Activated B cell treated with CpG ODN at 0.5 μM for 24 hours (primary cell): ENCODE measurements at regions of chr14 and their contacts with region 1.

Region 1: DNA sequence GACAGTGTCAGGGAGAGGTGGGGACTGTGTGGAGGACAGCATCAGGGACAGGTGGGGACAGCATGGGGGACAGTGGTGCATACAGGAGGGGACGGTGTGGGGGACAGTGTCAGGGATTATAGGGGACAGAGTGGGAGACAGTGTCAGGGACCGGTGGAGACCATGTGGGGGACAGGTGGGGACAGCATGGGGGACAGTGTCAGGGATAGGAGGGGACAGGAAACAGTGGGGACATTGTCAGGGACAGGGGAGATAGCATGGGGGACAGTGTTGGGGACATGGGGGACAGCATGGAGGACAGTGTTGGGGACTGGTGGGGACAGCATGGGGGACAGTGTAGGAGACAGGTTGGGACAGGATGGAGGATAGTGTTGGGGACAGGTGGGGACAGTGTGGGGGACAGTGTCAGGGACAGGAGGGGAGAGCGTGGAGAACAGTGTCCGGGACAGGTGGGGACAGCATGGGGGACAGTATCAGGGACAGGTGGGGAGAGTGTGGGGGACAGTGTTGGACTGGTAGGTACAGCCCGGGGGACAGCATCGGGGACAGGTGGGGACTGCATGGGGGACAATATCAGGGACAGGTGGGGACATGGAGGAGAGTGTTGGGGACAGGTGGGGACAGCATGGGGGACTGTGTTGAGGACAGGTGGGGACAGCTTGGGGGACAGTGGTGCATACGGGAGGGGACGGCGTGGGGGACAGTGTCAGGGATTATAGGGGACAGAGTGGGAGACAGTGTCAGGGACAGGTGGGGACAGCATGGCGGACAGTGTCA is 212.1 kb downstream of the TMEM121 start:
- DNase-seq: no peak
- ATAC-seq: peak; percentile 18
- H3K4me3 Mint-ChIP-seq: no peak overlapping the region
- H3K27ac Mint-ChIP-seq: peak overlapping the region; percentile 19
- H3K4me1 Mint-ChIP-seq: peaks cover 20% of the 10 kb centered on the region
- H3K27me3 Mint-ChIP-seq: no peaks in the 10 kb centered on the region
- CTCF ChIP-seq: no peak

Region 2: DNA sequence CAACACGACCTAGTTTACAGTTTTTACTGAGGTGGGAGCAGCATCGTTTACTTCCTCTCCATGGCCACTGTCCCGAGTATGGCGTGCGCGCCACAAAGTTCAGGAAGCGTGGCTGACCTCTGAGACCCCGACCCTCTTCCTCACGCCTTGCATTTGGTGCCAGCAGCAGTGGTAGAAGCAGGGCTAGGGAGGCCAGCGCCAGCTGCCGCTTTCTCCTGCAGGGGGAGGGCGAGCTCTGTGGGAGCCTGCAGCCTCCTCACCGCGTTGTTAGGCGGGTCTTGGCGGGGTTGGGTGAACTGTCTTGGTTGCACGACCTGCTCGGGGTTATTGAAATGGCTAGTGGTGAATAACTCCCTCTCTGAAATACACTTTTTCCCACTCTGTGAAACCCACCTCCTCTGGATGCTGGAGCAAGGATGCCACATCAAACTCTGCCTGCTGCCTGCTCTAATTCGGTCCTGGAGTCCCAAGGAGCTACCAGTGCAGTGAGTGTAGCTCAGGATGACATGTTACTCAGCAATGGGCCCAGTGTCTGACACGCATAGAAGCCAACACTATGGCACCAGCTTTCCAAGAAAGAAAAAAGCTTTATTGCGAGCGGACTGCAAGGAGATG is 1832.5 kb before region 1 on chr14:
- CTCF ChIA-PET with region 1: no interaction called
- POLR2A ChIA-PET with region 1: no interaction called
- intact Hi-C with region 1: no loop called
- DNase-seq: no peak
- ATAC-seq: no peak
- H3K4me3 Mint-ChIP-seq: no peak overlapping the region
- H3K27ac Mint-ChIP-seq: no peak overlapping the region
- H3K4me1 Mint-ChIP-seq: peaks cover 10% of the 10 kb centered on the region
- H3K27me3 Mint-ChIP-seq: no peaks in the 10 kb centered on the region
- CTCF ChIP-seq: no peak

Region 3: DNA sequence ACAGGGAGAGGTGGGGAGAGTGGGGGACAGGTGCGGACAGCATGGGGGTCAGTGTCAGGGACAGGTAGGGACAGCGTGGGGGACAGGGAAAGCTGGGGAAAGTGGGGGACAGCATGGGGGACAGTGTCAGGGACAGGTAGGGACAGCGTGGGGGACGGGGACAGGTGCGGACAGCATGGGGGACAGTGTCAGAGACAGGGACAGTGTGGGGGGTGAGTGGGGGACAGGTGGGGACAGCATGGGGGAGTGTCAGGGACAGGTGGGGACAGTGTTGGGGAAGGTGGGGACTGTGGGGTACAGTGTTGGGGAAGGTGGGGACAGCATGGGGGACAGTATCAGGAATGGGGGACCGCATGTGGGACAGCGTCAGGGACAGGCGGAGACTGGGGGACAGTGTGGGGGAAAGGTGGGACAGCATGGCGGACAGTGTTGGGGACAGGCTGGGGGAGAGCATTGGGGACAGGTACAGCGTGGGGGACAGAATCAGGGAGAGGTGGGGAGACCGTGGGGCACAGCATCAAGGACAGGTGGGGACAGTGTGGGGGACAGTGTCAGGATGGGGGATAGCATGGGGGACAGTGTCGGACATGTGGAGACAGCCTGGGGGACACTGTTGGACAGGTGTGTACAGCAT is 116.0 kb before region 1 on chr14:
- CTCF ChIA-PET with region 1: no interaction called
- POLR2A ChIA-PET with region 1: interaction called, 6 read pairs
- intact Hi-C with region 1: loop called (anchors 2 kb)
- DNase-seq: no peak
- ATAC-seq: no peak
- H3K4me3 Mint-ChIP-seq: no peak overlapping the region
- H3K27ac Mint-ChIP-seq: peak overlapping the region; percentile 37
- H3K4me1 Mint-ChIP-seq: peaks cover 1% of the 10 kb centered on the region
- H3K27me3 Mint-ChIP-seq: no peaks in the 10 kb centered on the region
- CTCF ChIP-seq: no peak

Region 4: DNA sequence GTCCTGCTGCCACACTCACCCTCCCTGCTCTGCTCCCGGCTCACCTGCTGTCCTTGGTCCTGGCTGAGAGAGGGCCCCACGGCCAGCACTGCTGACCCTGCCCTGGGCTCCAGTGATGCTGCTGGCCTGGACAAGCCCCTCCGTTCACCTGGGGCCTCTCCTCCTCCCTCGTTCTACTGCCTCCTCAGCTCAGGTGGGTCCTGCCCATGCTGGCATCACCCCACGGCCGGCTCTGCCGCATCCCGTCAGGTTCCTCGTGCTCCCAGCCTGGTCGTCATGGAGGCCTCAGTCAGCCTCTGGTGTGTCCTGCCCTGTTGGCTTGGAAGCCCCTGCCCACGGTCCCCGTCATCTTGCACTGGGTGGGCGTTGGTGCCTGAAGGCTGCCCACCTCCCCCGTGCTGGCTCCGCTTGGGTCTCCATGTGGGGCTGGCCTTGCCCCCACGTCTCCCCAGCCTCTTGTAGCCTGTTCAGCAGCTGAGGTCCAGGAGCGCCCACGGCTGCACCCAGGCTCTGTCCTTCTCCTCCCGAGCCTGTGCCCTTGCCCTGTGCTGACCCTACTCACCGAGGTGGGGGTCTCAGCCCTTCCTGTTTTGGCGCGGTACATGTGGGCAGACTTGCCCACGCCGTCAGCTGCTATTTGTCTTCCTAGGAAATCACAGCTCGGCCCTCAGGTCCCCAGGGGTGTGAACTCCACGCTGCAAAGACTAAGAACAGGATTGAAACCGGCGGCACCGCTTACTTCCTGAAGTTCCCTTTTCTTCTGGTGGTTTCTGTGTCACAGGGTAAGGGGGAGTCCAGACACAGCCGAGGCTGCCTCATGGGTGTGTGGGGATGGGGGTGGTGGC is 90.5 kb before region 1 on chr14:
- CTCF ChIA-PET with region 1: no interaction called
- POLR2A ChIA-PET with region 1: no interaction called
- intact Hi-C with region 1: no loop called
- DNase-seq: peak; percentile 41
- ATAC-seq: peak; percentile 85
- H3K4me3 Mint-ChIP-seq: peak overlapping the region; percentile 98
- H3K27ac Mint-ChIP-seq: peak overlapping the region; percentile 97
- H3K4me1 Mint-ChIP-seq: peaks cover 50% of the 10 kb centered on the region
- H3K27me3 Mint-ChIP-seq: no peaks in the 10 kb centered on the region
- CTCF ChIP-seq: no peak

Region 5: GRCh38 chr14:105908481-105908911 is 170.0 kb after region 1 on chr14:
- CTCF ChIA-PET with region 1: no interaction called
- POLR2A ChIA-PET with region 1: no interaction called
- intact Hi-C with region 1: no loop called
- DNase-seq: no peak
- ATAC-seq: peak; percentile 68
- H3K4me3 Mint-ChIP-seq: peak overlapping the region; percentile 69
- H3K27ac Mint-ChIP-seq: peak overlapping the region; percentile 63
- H3K4me1 Mint-ChIP-seq: peaks cover 30% of the 10 kb centered on the region
- H3K27me3 Mint-ChIP-seq: no peaks in the 10 kb centered on the region
- CTCF ChIP-seq: no peak

Region 6: GRCh38 chr14:106024983-106025604 is 286.6 kb after region 1 on chr14:
- CTCF ChIA-PET with region 1: no interaction called
- POLR2A ChIA-PET with region 1: no interaction called
- intact Hi-C with region 1: no loop called
- DNase-seq: no peak
- ATAC-seq: no peak
- H3K4me3 Mint-ChIP-seq: no peak overlapping the region
- H3K27ac Mint-ChIP-seq: no peak overlapping the region
- H3K4me1 Mint-ChIP-seq: no peaks in the 10 kb centered on the region
- H3K27me3 Mint-ChIP-seq: no peaks in the 10 kb centered on the region
- CTCF ChIP-seq: no peak